HEK293 (cell line): ENCODE measurements at regions of chr12 and their contacts with region 1.

Region 1: DNA sequence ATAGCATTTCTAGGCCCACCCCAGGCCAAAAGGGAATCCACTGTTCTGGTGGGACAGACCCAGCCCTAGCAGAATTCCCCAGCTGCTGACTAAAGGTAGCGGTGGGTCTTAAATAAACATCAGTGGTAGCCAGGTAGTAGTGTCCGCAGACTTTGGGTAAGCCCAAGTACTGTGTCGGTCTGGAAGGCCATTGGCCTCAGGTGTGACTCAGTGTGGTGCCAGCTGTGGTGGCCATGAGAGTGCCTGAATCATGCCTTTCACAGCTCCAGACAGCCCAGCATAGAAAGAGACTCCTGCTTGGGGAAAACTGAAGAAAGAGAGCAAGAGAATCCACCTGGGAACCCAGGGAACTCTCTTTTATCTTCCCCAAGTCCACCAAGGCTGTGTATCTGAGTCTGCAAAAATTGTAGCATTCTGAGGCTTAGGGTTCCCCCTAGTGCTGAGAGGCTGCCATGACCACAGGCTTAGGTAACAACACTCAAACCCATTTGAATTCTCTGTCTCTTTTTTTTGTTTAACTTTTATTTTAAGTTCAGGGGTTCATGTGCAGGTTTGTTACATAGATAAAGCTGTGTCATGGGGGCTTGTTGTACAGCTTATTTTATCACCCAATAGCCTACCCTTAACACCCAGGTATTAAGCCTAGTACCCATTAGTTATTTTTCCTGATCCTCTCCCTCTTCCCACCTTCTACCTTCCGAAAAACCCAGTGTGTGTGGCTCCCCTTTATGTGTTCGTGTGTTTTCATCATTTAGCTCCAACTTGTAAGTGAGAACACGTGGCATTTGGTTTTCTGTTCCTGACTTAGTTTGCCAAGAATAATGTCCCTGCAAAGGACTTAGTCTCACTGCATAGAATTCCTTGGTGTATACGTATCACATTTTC is 16.7 kb upstream of the CD163L1 start:
- H3K4me3 ChIP-seq: no peak overlapping the region
- H3K27ac ChIP-seq: no peak overlapping the region
- H3K4me1 ChIP-seq: no peaks in the 10 kb centered on the region
- CTCF ChIP-seq: peak; percentile 57; the same call in 1 of the 2 replicates

Region 2: DNA sequence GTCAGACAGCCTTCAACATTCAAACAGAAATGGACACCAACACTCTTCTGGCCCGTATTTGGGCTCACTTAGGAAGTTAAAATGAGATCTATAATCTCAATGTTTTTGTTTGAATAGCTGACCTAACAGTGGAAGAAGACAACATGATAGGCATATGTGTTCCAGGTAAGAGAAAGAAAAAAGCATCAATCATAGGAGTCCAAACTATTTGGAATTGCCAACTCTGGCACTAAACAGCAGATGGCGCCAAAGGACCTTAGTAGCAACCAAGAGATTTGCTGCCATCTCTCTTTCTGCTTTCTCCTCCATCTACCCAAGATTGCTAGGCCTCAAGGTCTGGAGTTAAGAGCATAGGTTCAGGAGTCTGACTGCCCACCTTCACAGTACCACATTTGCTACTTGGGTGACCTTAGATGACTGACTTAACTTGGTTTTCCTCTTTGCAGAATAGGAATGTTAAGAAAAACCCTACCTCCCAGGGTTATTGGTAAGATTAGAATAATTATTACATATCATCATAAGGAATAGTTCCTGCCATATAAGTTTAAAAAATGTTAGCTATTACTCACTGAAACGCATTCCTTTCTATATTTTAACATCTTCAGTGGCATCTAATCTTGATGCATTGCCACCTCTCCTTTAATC is 240.9 kb before region 1 on chr12:
- CTCF ChIA-PET with region 1: interaction called, 14 read pairs
- POLR2A ChIA-PET with region 1: no interaction called
- H3K4me3 ChIP-seq: no peak overlapping the region
- H3K27ac ChIP-seq: no peak overlapping the region
- H3K4me1 ChIP-seq: no peaks in the 10 kb centered on the region
- CTCF ChIP-seq: peak; percentile 81

Region 3: DNA sequence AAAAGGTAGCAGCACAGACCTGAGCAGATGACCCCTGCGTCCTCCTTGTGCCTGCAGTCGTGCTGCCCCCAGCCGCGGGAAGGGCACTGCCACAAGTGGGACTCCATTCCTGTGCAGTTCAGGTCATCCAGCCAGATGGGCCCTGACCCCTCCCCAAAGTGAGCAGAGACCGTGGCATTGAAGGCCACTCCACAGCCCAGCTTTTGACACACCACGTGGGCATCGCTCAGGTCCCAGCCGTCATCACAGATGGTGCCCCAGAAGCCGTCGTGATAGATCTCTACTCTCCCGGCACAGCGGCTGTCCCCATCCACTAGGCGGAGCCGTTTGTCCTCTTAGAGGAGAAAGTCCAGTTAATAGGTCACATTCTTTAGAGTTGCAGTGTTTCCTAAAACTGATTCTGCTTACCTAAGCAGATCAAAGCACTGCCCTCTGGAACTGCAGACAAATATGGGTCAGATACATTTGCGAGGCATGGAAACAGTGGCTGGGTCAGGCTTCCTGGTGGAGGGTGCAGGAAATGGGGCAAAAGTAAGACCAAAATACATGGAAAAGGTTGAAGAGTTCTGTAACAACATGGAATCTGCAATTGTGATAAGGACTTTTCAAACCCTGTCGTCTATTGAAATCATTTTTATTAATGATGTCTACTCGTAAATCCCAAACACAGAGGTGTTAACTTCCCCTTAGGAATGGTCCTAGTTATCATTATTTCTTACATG is 86.0 kb before region 1 on chr12:
- CTCF ChIA-PET with region 1: interaction called, 10 read pairs
- POLR2A ChIA-PET with region 1: no interaction called
- H3K4me3 ChIP-seq: no peak overlapping the region
- H3K27ac ChIP-seq: no peak overlapping the region
- H3K4me1 ChIP-seq: no peaks in the 10 kb centered on the region
- CTCF ChIP-seq: peak; percentile 31; the same call in 1 of the 2 replicates